PC-3 (cell line): ENCODE measurements at regions of chr6 and their contacts with region 1.

Region 1: DNA sequence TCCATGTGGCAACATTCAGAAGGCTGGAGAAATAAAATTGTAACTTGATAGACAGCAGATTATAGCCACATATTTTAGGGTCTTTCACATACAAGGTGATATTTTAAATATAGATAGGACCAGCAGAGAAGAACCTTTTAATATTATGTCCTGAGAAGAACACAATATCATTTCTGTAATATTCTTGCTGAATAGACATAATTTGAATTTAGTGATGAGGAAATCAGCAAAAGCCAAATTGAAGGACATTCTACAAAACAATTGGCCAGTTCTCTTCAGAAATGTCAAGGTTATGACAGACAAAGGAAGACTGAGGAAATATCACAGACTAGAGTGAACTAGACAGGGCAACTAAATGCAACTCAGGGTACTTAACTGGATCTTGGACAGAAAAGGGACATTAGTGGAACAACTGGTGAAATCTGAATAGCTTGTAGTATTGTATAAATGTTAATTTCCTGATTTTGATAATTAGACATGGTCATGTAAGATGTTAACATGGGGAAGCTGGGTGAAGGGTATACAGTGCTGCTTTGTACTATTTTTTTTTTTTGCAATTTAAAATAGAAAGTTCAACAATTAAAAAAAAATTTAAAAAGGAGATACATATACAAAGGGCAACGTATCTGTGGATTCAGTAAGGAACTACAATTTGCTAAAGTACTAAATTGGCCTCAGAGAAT is 134.5 kb upstream of the SIM1 start:
- DNase-seq: no peak
- ATAC-seq: no peak
- H3K4me3 ChIP-seq: no peak overlapping the region
- H3K27ac ChIP-seq: no peak overlapping the region
- H3K4me1 ChIP-seq: no peaks in the 10 kb centered on the region
- H3K27me3 ChIP-seq: no peaks in the 10 kb centered on the region
- CTCF ChIP-seq: no peak

Region 2: DNA sequence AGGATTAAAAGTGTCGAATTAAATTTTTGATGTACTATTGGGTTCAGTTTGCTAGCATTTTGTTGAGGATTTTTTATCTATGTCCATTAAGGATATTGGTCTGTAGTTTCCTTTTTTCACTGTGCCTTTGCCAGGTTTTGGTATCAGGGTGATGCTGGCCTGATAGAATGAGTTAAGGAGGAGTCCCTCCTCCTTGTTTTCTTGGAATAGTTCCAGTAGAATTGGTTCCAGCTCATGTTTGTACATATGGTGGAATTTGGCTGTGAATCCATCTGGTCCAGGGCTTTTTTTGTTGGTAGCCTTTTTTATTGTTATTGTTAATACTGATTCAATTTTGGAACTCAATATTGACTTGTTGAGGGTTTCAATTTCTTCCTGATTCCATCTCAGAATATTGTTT is 276.3 kb before region 1 on chr6:
- CTCF ChIA-PET with region 1: no interaction called
- POLR2A ChIA-PET with region 1: no interaction called
- intact Hi-C with region 1: no loop called
- DNase-seq: no peak
- ATAC-seq: no peak
- H3K4me3 ChIP-seq: no peak overlapping the region
- H3K27ac ChIP-seq: no peak overlapping the region
- H3K4me1 ChIP-seq: no peaks in the 10 kb centered on the region
- H3K27me3 ChIP-seq: no peaks in the 10 kb centered on the region
- CTCF ChIP-seq: no peak

Region 3: GRCh38 chr6:100633096-100633777 is 34.0 kb after region 1 on chr6:
- CTCF ChIA-PET with region 1: no interaction called
- POLR2A ChIA-PET with region 1: no interaction called
- intact Hi-C with region 1: loop called (anchors 1 kb)
- DNase-seq: peak; percentile 76
- ATAC-seq: peak; percentile 99
- H3K4me3 ChIP-seq: no peak overlapping the region
- H3K27ac ChIP-seq: peak overlapping the region; percentile 41; the same call in 1 of the 2 replicates
- H3K4me1 ChIP-seq: peaks cover 9% of the 10 kb centered on the region
- H3K27me3 ChIP-seq: no peaks in the 10 kb centered on the region
- CTCF ChIP-seq: no peak